CD8-positive, alpha-beta T cell (primary cell): ENCODE measurements at regions of chr5 and their contacts with region 1.

Region 1: DNA sequence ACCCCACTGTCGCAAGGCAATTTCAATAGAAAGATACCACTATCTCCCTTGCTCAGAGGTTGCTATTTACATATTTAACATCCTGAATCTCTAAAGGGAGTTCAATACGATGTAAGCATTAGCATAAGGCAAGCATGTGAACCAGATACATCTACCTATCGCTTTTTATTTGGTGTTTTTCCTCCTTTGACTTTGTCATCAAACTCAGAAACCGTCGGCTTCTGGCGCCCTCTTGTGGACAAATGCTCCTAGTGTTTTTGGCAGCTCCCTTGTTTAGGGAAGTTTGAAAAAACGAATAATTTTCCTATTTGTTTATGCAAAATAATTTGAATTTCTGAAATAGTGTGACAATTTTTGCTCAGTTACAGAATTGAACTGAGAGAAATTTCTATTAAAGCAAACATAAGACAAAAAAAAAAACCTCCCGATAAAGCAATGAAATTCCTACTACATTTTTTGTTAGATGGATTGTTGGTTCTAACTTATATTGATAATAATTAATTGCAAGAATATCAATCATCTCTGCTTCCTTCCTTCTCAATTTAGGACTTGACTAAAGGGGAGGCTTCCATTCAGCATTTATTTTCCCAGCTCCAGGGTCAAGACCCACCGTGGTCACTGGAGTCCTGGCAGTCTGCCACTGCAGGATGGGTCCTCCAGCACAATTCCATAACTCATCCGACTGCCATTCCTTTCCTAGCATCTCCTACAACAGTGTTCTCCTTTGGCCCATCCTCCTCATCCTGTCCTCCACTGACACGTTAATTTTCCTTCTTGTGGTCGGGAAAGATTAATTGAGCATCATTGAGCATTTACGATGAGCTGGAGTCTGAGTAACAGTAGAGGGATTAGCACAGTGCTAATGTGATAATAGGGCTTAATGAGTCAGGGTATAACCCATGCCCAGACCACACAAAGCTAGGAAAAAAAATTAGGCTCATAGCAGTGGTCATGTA is 131.8 kb upstream of the CHD1 start:
- DNase-seq: peak; percentile 79 to 93 (median 86)
- ATAC-seq: peak; percentile 76
- H3K4me3 ChIP-seq: no peak overlapping the region
- H3K4me3 Mint-ChIP-seq: peak overlapping the region; percentile 29
- H3K27ac ChIP-seq: no peak overlapping the region
- H3K27ac Mint-ChIP-seq: no peak overlapping the region
- H3K4me1 ChIP-seq: peaks cover 5% of the 10 kb centered on the region
- H3K4me1 Mint-ChIP-seq: peaks cover 5% of the 10 kb centered on the region
- H3K27me3 ChIP-seq: no peaks in the 10 kb centered on the region
- H3K27me3 Mint-ChIP-seq: peaks cover 8% of the 10 kb centered on the region
- CTCF ChIP-seq: peak; percentile 95

Region 2: GRCh38 chr5:98773464-98774191 is 287.0 kb before region 1 on chr5 and contains the start of gene RGMB:
- CTCF ChIA-PET with region 1: no interaction called
- POLR2A ChIA-PET with region 1: no interaction called
- intact Hi-C with region 1: loop called in 1 of 2 experiments (anchors 10 kb)
- DNase-seq: peak; percentile 71 to 92 (median 89)
- ATAC-seq: peak; percentile 86
- H3K4me3 ChIP-seq: peak within 1 kb of the TSS; percentile 69 to 70
- H3K4me3 Mint-ChIP-seq: peak within 1 kb of the TSS; percentile 95
- H3K27ac ChIP-seq: peak within 1 kb of the TSS; percentile 37 to 53
- H3K27ac Mint-ChIP-seq: peak within 1 kb of the TSS; percentile 87
- H3K4me1 ChIP-seq: peaks cover 41% of the 10 kb centered on the region
- H3K4me1 Mint-ChIP-seq: peaks cover 56% of the 10 kb centered on the region
- H3K27me3 ChIP-seq: peaks cover 0 to 12% of the 10 kb centered on the region in 2 experiments
- H3K27me3 Mint-ChIP-seq: peaks cover 24% of the 10 kb centered on the region
- CTCF ChIP-seq: no peak
- total RNA-seq, gene RGMB: 5.8 to 6.6 TPM

Region 3: DNA sequence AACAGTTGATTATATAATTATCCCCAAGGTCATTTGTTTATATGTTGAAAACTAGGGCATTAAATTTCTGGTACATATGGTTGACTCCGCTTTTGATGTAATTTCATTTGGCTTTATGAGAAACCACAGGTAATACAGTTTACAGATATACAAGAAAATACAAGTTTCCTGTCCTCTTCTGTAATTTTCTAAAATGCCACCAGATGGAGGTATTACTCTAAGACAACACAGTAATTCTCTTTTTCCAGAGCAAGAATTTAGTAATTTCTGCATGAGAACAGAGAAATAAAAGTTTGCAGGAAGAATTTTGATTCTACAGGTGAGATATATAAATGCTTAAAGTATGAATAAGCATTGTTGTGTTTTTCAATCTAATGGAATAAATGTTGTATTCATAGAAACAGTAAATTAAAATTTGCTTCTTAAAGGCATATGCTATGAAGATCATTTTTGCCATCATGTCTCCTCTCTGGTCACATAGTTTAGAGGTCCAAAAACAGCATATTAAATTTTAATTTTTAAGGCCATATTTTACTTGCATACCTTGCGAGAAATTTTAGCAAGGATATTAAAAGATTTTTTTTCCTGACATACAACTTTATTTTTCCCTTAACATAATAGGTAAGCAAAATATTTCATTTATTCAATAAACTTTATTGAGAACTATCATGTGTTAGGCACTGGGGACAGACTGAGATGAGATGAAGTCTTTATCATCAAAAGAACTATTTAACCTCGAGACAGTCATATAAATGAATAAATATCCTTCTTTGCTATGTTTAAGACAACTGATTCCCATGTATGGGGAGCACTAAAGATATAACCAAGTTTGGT is 154.5 kb before region 1 on chr5:
- CTCF ChIA-PET with region 1: interaction called, 83 read pairs
- POLR2A ChIA-PET with region 1: interaction called, 5 read pairs
- intact Hi-C with region 1: loop called (anchors 1 kb)
- DNase-seq: peak in 2 of 9 experiments; percentile 62 to 72
- ATAC-seq: peak; percentile 67
- H3K4me3 ChIP-seq: no peak overlapping the region
- H3K4me3 Mint-ChIP-seq: no peak overlapping the region
- H3K27ac ChIP-seq: peak overlapping the region in 1 of 2 experiments; percentile 34
- H3K27ac Mint-ChIP-seq: no peak overlapping the region
- H3K4me1 ChIP-seq: peaks cover 20% of the 10 kb centered on the region
- H3K4me1 Mint-ChIP-seq: peaks cover 51% of the 10 kb centered on the region
- H3K27me3 ChIP-seq: no peaks in the 10 kb centered on the region
- H3K27me3 Mint-ChIP-seq: no peaks in the 10 kb centered on the region
- CTCF ChIP-seq: peak; percentile 96

Region 4: DNA sequence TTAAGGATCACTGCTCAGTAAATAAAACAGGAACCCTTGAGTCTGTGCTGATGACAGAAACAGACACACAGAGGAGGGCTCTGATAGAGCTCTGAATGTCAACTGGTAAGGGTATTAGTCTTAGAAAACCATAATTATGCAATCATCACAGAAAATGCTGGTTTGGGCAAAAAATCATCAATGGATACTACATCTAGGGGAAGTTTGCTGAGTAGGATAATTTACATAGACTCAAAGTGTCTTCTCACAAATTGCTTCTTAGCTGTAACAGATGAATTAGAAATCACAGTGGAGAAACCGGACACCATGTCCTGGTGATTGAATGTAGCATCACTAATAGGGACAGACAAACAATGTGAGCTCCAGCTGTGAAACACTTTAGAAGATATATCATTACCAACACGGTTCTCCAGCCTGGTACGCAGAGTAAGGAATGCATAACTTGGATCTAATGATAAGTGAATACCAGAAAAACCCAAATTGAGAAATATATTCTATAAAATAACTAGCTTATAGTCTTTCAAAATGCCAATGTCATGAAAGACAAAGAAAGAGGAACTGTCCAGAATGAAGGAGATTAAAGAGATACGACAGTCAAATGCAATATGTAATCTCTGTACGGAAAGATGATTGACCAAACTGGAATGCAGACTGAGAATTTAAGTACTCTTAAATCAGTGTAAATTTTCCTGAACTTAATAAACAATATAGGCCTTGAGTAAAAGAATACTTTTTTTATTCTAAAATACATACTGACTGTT is 149.1 kb before region 1 on chr5:
- CTCF ChIA-PET with region 1: interaction called, 35 read pairs
- POLR2A ChIA-PET with region 1: interaction called, 5 read pairs
- intact Hi-C with region 1: loop called (anchors 1 kb)
- DNase-seq: no peak
- ATAC-seq: no peak
- H3K4me3 ChIP-seq: no peak overlapping the region
- H3K4me3 Mint-ChIP-seq: no peak overlapping the region
- H3K27ac ChIP-seq: no peak overlapping the region
- H3K27ac Mint-ChIP-seq: no peak overlapping the region
- H3K4me1 ChIP-seq: peaks cover 36% of the 10 kb centered on the region
- H3K4me1 Mint-ChIP-seq: peaks cover 75% of the 10 kb centered on the region
- H3K27me3 ChIP-seq: no peaks in the 10 kb centered on the region
- H3K27me3 Mint-ChIP-seq: no peaks in the 10 kb centered on the region
- CTCF ChIP-seq: no peak

Region 5: DNA sequence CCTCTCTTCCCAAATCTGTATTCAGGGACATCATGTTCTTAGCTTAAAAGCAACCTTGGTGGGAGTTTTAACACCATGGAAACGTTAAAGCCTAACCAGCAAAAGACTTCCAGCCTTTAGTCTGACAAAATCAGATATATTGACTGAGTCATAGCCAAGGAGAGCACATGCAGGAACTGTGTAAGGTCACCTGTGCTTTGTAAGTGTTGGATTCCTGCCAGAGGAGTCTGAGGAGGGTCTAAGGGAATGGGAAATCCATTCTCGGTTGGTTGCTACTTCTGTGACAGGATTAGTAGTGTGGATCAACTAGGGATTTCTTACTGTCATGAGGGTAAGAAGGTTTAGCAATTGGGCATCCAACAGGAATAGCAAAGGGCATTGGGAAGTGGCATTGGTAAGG is 10.2 kb after region 1 on chr5:
- CTCF ChIA-PET with region 1: interaction called, 12 read pairs
- POLR2A ChIA-PET with region 1: interaction called, 4 read pairs
- intact Hi-C with region 1: no loop called
- DNase-seq: no peak
- ATAC-seq: no peak
- H3K4me3 ChIP-seq: no peak overlapping the region
- H3K4me3 Mint-ChIP-seq: no peak overlapping the region
- H3K27ac ChIP-seq: no peak overlapping the region
- H3K27ac Mint-ChIP-seq: no peak overlapping the region
- H3K4me1 ChIP-seq: no peaks in the 10 kb centered on the region
- H3K4me1 Mint-ChIP-seq: peaks cover 3% of the 10 kb centered on the region
- H3K27me3 ChIP-seq: no peaks in the 10 kb centered on the region
- H3K27me3 Mint-ChIP-seq: no peaks in the 10 kb centered on the region
- CTCF ChIP-seq: no peak

Region 6: DNA sequence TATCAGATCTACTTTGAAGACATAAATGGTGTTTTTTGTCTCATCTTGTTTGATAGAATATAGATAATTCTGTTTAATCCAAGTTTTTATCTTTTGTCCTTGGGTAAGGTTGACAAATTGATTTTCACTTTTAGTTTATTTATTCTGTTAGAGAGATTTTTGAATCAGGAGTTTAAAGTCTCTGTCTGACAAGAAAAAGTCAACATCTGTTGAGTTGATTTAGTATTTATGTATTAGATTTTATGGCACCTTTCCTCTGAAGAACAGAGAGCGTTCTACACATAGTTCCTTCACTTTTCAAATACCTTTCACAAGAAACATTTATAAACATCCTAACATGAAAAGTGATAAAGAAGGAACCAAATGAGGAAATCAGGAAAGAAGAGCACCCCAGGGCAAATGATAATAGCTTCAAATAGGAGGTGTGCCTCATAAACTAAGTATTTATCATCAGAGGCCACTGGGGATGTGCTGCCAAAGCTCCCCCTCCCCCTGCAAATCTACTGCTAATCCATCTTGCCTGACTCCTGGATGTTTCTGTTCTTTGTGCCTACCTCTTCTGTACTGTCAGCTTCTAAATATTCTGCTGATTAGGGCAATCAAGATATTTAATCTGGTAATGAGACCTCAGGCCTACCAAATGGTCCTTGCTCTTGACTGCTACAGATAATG is 326.0 kb after region 1 on chr5:
- CTCF ChIA-PET with region 1: no interaction called
- POLR2A ChIA-PET with region 1: no interaction called
- intact Hi-C with region 1: no loop called
- DNase-seq: no peak
- ATAC-seq: no peak
- H3K4me3 ChIP-seq: no peak overlapping the region
- H3K4me3 Mint-ChIP-seq: no peak overlapping the region
- H3K27ac ChIP-seq: no peak overlapping the region
- H3K27ac Mint-ChIP-seq: no peak overlapping the region
- H3K4me1 ChIP-seq: no peaks in the 10 kb centered on the region
- H3K4me1 Mint-ChIP-seq: no peaks in the 10 kb centered on the region
- H3K27me3 ChIP-seq: no peaks in the 10 kb centered on the region
- H3K27me3 Mint-ChIP-seq: no peaks in the 10 kb centered on the region
- CTCF ChIP-seq: no peak